HCT116 (cell line): ENCODE measurements at regions of chr15 and their contacts with region 1.

Region 1: DNA sequence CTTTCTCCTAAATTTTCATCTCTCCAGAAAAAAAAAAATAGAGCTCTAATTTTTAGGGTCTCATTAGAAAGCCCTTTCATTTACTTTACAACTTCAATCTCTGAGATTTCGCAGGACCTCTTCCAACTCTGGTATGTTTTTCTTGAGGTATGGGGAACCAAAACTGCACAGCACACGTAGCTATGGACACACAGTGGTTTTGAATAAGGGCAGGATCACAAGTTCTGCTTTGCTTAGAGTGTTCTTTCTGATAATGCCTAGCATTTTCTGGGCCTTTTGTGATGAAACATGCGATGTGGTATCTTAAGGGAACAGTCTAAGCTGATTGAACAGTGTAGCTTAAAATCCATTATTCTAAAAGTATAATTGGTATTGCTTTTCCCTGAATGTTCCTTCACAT is 25.3 kb downstream of the ZNF592 start:
- DNase-seq: no peak
- ATAC-seq: no peak
- H3K4me3 ChIP-seq: no peak overlapping the region
- H3K27ac ChIP-seq: no peak overlapping the region
- H3K4me1 ChIP-seq: no peaks in the 10 kb centered on the region
- H3K27me3 ChIP-seq: no peaks in the 10 kb centered on the region
- CTCF ChIP-seq: no peak
- POLR2A ChIP-seq: no peak
- RAD21 ChIP-seq: no peak

Region 2: DNA sequence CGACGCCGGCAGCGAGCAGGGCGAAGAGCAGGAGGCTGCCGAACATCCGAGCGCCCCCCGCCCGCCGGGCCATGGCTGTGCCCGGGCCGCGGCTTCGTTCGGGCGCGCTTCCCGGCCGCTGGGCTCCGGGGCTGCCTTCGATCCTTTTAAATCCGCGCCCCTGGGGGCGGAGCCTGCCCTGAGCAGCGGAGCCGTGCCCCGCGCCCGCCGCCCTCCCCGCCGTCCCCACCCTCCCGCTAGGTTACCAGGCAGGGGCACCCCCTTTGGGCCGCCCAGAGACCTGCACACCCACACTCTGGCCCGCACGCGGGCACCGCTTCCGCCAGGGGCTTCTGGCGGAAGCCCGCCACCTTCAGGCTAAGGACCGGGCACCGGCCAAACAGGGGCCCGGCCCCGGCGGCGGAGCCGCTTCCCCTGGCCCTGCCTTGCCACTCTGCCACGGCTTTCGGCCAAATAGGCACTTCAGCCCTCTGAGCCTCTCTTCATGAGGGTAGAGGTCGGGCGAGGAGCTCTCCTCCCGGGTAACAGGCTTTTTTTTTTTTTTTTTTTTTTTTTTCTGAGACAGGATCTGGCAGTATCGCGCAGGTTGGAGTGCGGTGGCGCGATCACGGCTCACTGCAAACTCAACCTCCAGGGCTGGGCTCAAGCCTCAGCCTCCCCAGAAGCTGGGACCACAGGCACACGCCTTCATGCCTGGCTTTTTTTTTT is 115.5 kb before region 1 on chr15 and contains the start of gene NMB:
- CTCF ChIA-PET with region 1: no interaction called
- POLR2A ChIA-PET with region 1: no interaction called
- RAD21 ChIA-PET with region 1: no interaction called
- intact Hi-C with region 1: loop called (anchors 10 kb)
- DNase-seq: peak; percentile 24
- ATAC-seq: peak; percentile 50
- H3K4me3 ChIP-seq: peak within 1 kb of the TSS; percentile 31 to 56
- H3K27ac ChIP-seq: peak within 1 kb of the TSS; percentile 58
- H3K4me1 ChIP-seq: peaks cover 14 to 33% of the 10 kb centered on the region in 2 experiments
- H3K27me3 ChIP-seq: no peaks in the 10 kb centered on the region
- CTCF ChIP-seq: peak; percentile 14 to 30 (median 22); a peak in 3 of 6 replicates
- POLR2A ChIP-seq: no peak
- RAD21 ChIP-seq: no peak; the same call in 1 of the 2 replicates
- total RNA-seq, gene NMB: 9.8 TPM

Region 3: DNA sequence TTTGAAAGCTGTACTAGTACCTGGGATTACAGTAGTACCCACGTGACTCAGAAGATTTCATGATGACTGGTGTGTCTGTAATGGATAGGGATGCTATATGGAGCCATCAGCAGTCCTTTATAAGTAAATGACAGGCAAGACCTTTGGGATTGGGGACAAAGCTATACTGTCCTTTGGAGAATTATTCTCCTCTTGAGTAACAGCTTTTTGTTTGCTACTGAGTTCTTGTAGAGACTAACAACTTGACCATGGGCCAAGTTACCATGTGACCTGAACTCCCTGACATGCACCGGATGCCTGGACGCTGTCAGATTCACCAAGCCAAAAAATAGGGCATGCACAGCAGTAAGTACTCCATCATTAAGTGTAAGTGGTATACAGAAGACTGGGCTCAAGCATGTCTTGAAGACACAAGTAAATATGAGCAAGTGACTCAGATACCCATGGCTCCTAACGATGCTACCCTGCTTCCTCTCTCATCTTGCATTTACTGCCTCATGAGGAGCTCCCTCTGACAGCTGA is 70.7 kb before region 1 on chr15:
- CTCF ChIA-PET with region 1: no interaction called
- POLR2A ChIA-PET with region 1: no interaction called
- RAD21 ChIA-PET with region 1: no interaction called
- intact Hi-C with region 1: no loop called
- DNase-seq: no peak
- ATAC-seq: no peak
- H3K4me3 ChIP-seq: no peak overlapping the region
- H3K27ac ChIP-seq: no peak overlapping the region
- H3K4me1 ChIP-seq: no peaks in the 10 kb centered on the region
- H3K27me3 ChIP-seq: no peaks in the 10 kb centered on the region
- CTCF ChIP-seq: no peak
- POLR2A ChIP-seq: no peak
- RAD21 ChIP-seq: no peak

Region 4: GRCh38 chr15:84785053-84785452 is 11.3 kb after region 1 on chr15:
- CTCF ChIA-PET with region 1: no interaction called
- POLR2A ChIA-PET with region 1: no interaction called
- RAD21 ChIA-PET with region 1: no interaction called
- intact Hi-C with region 1: no loop called
- DNase-seq: no peak
- ATAC-seq: no peak
- H3K4me3 ChIP-seq: no peak overlapping the region
- H3K27ac ChIP-seq: no peak overlapping the region
- H3K4me1 ChIP-seq: no peaks in the 10 kb centered on the region
- H3K27me3 ChIP-seq: no peaks in the 10 kb centered on the region
- CTCF ChIP-seq: no peak
- POLR2A ChIP-seq: no peak
- RAD21 ChIP-seq: no peak

Region 5: DNA sequence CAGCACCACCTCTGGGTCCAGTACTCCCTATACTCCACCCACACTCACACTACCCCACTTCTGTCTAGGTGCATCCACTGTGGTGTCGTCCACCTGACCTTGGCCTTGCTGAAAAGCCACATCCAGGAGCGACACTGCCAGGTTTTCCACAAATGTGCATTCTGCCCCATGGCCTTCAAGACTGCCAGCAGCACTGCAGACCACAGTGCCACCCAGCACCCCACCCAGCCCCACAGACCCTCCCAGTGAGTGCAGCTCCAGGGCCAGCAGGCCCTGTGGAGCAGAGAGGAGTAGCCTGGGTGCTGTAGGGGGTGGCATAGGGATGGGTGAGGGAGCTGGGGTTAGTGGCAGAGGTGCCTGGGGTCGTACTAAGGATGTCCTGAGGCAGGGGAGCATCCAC is 24.1 kb after region 1 on chr15:
- CTCF ChIA-PET with region 1: no interaction called
- POLR2A ChIA-PET with region 1: no interaction called
- RAD21 ChIA-PET with region 1: no interaction called
- intact Hi-C with region 1: no loop called
- DNase-seq: no peak
- ATAC-seq: no peak
- H3K4me3 ChIP-seq: no peak overlapping the region
- H3K27ac ChIP-seq: no peak overlapping the region
- H3K4me1 ChIP-seq: no peaks in the 10 kb centered on the region
- H3K27me3 ChIP-seq: no peaks in the 10 kb centered on the region
- CTCF ChIP-seq: no peak
- POLR2A ChIP-seq: no peak
- RAD21 ChIP-seq: no peak